ENCODE measurements at regions of chr22 and their contacts with region 1.

Region 1: GRCh38 chr22:41280066-41280465 is 5.9 kb downstream of the RANGAP1 start:
- DNase-seq: no peak
- H3K4me3 ChIP-seq: no peak overlapping the region
- H3K27ac ChIP-seq: no peak overlapping the region; the same call in 1 of the 2 replicates
- H3K4me1 ChIP-seq: peaks cover 0 to 5% (median 0%) of the 10 kb centered on the region in 4 experiments; a peak in 2 of 7 replicates
- H3K27me3 ChIP-seq: no peaks in the 10 kb centered on the region
- CTCF ChIP-seq: no peak
- EP300 ChIP-seq: no peak
- POLR2A ChIP-seq: no peak
- RAD21 ChIP-seq: no peak

Region 2: DNA sequence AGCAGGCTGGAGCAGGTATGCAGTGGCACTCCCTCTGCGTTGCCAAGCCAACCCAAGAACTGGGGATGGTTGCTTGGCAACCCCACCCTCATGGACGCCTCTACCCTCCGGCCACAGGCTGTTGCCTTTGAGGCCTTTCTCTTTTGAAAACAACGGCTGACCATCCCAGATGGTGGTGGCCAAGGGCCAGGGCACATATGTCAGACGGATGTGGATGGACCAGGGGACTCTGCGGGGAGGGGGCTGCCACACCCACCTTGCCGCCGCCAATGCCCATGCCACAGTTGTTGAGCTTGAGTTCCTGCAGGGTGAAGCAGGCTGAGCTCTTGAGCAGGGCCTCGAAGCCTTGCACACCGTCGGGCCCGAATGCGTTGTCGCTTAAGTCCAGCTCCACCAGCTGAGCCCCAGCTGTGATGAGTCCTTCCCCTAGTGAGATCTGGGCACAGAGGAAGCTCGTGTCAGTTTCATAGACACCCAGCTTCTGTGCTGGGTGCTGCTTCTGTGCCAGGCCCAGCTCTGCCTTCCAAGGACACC is 15.6 kb before region 1 on chr22:
- CTCF ChIA-PET with region 1: interaction called, 7 read pairs
- POLR2A ChIA-PET with region 1: interaction called, 24 read pairs
- DNase-seq: no peak
- H3K4me3 ChIP-seq: no peak overlapping the region
- H3K27ac ChIP-seq: no peak overlapping the region
- H3K4me1 ChIP-seq: no peaks in the 10 kb centered on the region
- H3K27me3 ChIP-seq: no peaks in the 10 kb centered on the region
- CTCF ChIP-seq: no peak
- EP300 ChIP-seq: no peak
- POLR2A ChIP-seq: no peak
- RAD21 ChIP-seq: no peak